Right ventricle myocardium superior (tissue), 1 donor: ENCODE measurements at regions of chr6 and their contacts with region 1.

Region 1: GRCh38 chr6:41787219-41787917 is at the start of gene TOMM6:
- DNase-seq: peak; percentile 98
- ATAC-seq: peak; percentile 88
- total RNA-seq, gene TOMM6: 218 TPM

Region 2: GRCh38 chr6:41895300-41896233 is 108.2 kb after region 1 on chr6 and contains the start of gene USP49:
- intact Hi-C with region 1: loop called (anchors 10 kb)
- DNase-seq: peak; percentile 93
- ATAC-seq: peak; percentile 100
- total RNA-seq, gene USP49: 1.2 TPM

Region 3: GRCh38 chr6:41920921-41921711 is 133.7 kb after region 1 on chr6 and contains the starts of genes BYSL and MED20:
- intact Hi-C with region 1: loop called (anchors 2 kb)
- DNase-seq: peak; percentile 95
- ATAC-seq: peak; percentile 99
- total RNA-seq, gene BYSL: 9.0 TPM
- total RNA-seq, gene MED20: 19.8 TPM

Region 4: DNA sequence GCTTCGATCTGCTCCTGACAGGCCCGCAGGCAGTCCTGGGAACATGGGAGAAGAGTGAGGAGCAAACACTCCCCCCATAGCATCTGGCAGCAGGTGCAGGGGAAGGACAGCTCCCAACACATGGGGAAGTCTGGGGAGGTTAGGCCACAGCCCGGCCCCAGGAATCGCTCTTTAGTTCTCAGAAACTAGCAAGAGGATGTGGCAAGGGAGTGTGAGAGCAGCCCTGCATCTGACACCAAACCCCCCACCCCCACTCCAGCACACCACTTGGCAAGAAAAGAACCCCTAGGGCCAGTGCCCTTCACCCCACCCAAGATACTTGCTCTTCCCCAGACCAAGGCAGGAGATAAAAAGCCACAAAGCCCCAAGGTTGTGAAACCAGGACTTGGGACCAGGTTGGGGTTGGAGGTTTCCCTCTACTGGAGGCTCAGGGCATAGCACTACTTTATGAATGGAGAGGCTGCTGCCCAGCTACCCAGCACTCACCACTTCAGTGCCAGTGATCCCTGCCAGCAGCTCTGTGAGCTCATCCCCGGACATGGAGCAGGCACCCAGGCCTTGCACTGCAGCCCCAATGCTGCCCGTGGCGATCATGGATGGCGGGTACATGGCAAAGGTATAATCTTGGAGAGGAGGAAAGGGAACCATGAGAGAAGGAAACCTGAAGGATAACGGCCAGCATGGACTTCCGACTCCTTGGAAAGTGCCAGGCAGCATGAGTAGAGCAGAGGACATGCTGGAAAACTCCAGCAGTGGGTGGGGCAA is 148.9 kb after region 1 on chr6:
- intact Hi-C with region 1: loop called (anchors 5 kb)
- DNase-seq: peak; percentile 81
- ATAC-seq: peak; percentile 79